ENCODE measurements at regions of chr5 and their contacts with region 1.

Region 1: GRCh38 chr5:14762549-14763216 is 98.2 kb downstream of the OTULIN start:
- DNase-seq: no peak
- ATAC-seq: no peak
- H3K4me3 ChIP-seq: no peak overlapping the region
- H3K27ac ChIP-seq: no peak overlapping the region
- H3K4me1 ChIP-seq: peaks cover under 1% of the 10 kb centered on the region; the same call in 1 of the 2 replicates
- H3K27me3 ChIP-seq: no peaks in the 10 kb centered on the region
- CTCF ChIP-seq: no peak

Region 2: GRCh38 chr5:14695152-14695551 is 67.5 kb before region 1 on chr5:
- CTCF ChIA-PET with region 1: interaction called, 11 read pairs
- POLR2A ChIA-PET with region 1: no interaction called
- in situ Hi-C with region 1: no loop called
- intact Hi-C with region 1: no loop called
- DNase-seq: no peak
- ATAC-seq: no peak
- H3K4me3 ChIP-seq: no peak overlapping the region
- H3K27ac ChIP-seq: no peak overlapping the region
- H3K4me1 ChIP-seq: no peaks in the 10 kb centered on the region
- H3K27me3 ChIP-seq: no peaks in the 10 kb centered on the region
- CTCF ChIP-seq: no peak

Measured in Panc1 (cell line).